ENCODE measurements at regions of chr18 and their contacts with region 1.

Region 1: DNA sequence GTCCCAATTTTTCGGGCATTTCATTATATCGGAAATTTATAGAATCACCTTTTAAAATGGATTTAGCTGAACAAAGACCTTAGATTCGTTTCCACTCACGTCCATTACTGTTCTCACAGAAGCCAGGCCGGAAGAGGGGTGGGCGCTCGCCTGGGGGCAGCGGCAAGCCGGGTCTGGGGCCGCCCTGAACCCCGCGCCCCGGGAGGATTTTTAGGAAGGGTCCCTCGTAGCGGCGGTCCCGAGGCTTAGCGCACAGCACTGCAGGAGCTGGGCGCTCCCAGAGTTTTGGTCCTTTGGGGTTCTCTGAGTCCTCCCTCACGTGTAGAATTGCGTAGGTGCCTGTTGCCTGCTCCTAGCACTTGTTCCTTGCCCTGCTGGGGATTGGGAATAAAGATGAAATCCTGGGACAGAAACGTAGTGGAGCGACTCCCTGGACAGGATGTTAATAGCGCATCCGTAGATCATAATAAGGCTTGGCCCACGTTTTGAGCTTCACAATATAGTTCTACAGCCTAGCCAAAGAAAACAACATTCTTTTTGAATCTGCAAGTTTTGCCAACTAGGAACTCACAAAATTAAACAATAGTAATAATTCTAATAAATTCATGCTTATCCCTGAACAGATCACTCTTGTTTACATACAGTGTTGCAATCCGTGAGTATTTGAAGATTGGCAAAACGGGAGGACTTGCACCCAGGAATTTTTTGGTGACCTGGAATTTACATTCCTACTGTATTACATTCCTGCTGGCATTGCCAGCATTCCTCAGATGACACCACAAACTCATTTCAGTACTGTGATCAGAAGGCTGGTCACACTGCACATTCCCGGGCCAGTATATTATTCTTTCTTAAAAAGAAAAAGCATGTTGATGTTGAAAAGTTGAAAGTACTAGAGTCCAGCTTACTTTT is 876 bp downstream of the C18orf63 start:
- DNase-seq: no peak
- H3K4me3 ChIP-seq: no peak overlapping the region
- H3K27ac ChIP-seq: no peak overlapping the region
- H3K4me1 ChIP-seq: no peaks in the 10 kb centered on the region
- H3K27me3 ChIP-seq: no peaks in the 10 kb centered on the region
- CTCF ChIP-seq: no peak
- EP300 ChIP-seq: no peak
- POLR2A ChIP-seq: no peak

Region 2: GRCh38 chr18:74337155-74337911 is 20.8 kb after region 1 on chr18:
- in situ Hi-C with region 1: no loop called
- intact Hi-C with region 1: loop called (anchors 2 kb)
- DNase-seq: no peak
- H3K4me3 ChIP-seq: no peak overlapping the region
- H3K27ac ChIP-seq: no peak overlapping the region
- H3K4me1 ChIP-seq: no peaks in the 10 kb centered on the region
- H3K27me3 ChIP-seq: no peaks in the 10 kb centered on the region
- CTCF ChIP-seq: no peak
- EP300 ChIP-seq: no peak
- POLR2A ChIP-seq: no peak

Measured in transverse colon (tissue), 4 donors.